Common myeloid progenitor, CD34-positive (primary cell): ENCODE measurements at regions of chr5 and their contacts with region 1.

Region 1: DNA sequence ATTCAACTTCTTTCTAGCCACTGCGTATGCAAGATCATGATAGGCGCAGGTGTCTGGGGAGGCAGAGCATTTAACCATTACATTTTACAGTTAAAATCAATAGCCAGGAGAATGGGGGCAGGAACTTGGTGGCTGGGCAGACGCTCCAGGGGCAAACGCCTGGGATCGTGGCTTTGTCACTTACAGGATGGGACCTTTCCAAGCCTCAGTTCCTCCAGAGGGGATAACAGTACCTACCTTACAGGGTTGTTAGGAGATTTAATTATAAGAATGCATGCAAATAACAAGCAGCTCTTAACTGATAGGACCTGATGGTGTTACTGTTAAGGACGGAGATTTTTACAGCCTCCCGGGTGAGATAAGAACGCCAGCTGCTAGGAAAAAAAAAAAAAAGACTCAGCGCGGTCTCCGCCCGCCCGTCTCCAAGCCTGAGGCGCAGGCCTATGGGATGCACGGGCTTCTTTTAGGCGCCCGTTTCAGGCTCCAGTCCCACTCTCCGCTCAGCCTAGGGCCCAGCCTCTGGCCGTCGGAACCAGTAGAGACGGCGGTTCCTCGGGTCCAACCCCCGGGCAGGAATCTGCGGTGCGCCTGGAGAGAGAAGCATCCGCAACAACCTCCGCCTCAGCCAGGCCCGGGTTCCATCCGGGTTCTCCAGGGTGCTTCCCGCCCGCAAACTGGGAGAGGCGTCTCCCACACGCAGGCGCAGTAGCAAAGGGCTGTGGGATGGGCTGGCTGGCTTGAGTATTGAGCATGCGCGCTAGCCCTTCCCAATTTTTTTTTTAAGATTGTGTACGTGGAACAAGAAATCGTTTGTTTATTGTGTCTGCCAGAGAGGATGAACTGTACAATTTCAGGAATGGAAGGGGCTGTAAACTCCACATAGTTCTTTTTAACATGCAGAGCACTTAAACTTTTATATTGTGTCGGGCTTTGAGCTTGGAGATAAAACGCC is at the start of gene FAM200C:
- DNase-seq: peak; percentile 83 to 88 (median 85)
- H3K4me3 ChIP-seq: peak within 1 kb of the TSS; percentile 70 to 89 (median 83)
- H3K27ac ChIP-seq: peak within 1 kb of the TSS; percentile 71 to 82
- H3K4me1 ChIP-seq: peaks cover 5 to 8% (median 7%) of the 10 kb centered on the region in 4 experiments
- H3K27me3 ChIP-seq: no peaks in the 10 kb centered on the region

Region 2: DNA sequence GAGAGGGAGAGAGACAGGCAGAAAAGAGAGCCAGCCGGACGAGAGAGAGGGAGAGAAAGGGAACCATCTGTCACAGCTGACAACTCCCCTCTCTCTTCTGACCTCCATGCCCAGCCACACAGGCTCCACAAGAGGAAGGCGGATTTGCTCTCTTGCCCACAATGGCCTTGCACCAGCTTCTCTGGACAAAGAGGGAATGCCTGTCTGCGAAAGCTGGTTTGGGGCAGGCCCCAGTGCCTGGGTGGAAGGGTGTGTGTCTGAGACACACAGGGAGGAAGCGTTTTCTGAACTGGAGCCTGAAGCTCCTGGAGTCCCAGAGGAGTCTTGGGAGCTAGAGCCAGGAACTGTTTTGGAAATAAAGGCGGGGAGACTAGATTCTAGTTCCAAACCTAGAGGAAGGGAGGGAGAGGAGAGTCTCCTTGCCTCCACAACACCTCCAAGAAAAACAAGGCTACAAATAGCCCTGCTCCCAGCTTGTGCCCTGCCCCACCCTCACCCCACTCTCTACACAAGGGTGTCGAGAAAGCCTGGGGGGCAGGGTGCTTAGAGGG is 41.7 kb before region 1 on chr5:
- CTCF ChIA-PET with region 1: no interaction called
- POLR2A ChIA-PET with region 1: no interaction called
- DNase-seq: no peak
- H3K4me3 ChIP-seq: no peak overlapping the region
- H3K27ac ChIP-seq: no peak overlapping the region
- H3K4me1 ChIP-seq: no peaks in the 10 kb centered on the region
- H3K27me3 ChIP-seq: no peaks in the 10 kb centered on the region

Region 3: GRCh38 chr5:160418561-160419457 is 19.1 kb after region 1 on chr5 and contains the start of gene SLU7:
- CTCF ChIA-PET with region 1: interaction called, 12 read pairs
- POLR2A ChIA-PET with region 1: no interaction called
- DNase-seq: peak; percentile 98 to 99 (median 99)
- H3K4me3 ChIP-seq: peak within 1 kb of the TSS; percentile 65 to 99 (median 96)
- H3K27ac ChIP-seq: peak within 1 kb of the TSS; percentile 95 to 98
- H3K4me1 ChIP-seq: peaks cover 26 to 54% (median 44%) of the 10 kb centered on the region in 4 experiments
- H3K27me3 ChIP-seq: no peaks in the 10 kb centered on the region